Posterior vena cava (tissue), 2 donors: ENCODE measurements at regions of chr10 and their contacts with region 1.

Region 1: GRCh38 chr10:33743429-33743857 is 409.0 kb upstream of the NRP1 start:
- DNase-seq: no peak

Region 2: GRCh38 chr10:33134011-33134751 is 609.3 kb before region 1 on chr10:
- intact Hi-C with region 1: no loop called
- DNase-seq: no peak

Region 3: GRCh38 chr10:33781606-33782395 is 38.4 kb after region 1 on chr10:
- intact Hi-C with region 1: loop called in 1 of 2 experiments (anchors 1 kb)
- DNase-seq: no peak